HepG2 (cell line): ENCODE measurements at regions of chr12 and their contacts with region 1.

Region 1: DNA sequence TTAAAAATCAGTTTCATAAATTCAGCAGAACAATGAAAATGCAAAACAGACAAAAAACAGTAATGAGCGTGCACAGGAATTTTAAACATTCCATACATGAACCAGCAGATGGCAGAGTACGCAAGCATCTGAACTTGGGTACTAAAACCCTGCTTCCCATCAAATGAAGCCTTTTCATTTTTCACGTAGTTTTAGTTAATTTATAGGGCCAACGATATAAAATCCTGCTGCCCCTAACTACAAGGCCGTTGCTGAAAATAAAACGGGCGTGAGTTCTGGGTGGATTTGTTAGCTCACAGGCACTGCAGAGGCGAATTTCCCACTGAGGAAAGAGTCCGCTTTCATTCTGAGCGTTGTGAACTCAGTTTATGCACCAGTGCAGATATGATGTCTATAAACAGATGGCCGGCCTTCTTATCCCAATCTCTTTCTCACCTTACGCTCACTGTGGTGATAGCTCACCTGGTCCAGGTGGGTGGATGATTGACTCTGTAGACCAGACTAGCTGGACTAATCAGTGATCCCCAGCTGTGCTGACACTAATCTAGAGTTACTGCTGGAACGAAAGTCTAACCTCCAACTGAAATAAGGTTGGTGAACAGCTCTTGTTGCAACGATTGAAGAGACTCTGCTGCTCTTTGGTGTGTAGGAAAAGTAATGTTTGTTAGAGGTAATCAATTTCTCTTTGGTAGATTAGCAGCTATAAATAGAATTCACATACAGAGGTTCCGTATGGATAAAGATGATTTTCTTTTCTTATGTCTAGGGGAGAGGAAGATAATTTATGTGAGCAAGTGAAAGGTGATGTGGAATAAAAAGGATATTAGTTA is 89.2 kb downstream of the PDZRN4 start:
- DNase-seq: peak; percentile 26
- ATAC-seq: peak; percentile 54; the same call in 2 of the 3 replicates
- H3K4me3 ChIP-seq: no peak overlapping the region
- H3K27ac ChIP-seq: no peak overlapping the region
- H3K4me1 ChIP-seq: no peaks in the 10 kb centered on the region
- H3K27me3 ChIP-seq: no peaks in the 10 kb centered on the region
- CTCF ChIP-seq: peak; percentile 75
- EP300 ChIP-seq: no peak
- POLR2A ChIP-seq: no peak
- RAD21 ChIP-seq: peak; percentile 54; the same call in 1 of the 2 replicates

Region 2: DNA sequence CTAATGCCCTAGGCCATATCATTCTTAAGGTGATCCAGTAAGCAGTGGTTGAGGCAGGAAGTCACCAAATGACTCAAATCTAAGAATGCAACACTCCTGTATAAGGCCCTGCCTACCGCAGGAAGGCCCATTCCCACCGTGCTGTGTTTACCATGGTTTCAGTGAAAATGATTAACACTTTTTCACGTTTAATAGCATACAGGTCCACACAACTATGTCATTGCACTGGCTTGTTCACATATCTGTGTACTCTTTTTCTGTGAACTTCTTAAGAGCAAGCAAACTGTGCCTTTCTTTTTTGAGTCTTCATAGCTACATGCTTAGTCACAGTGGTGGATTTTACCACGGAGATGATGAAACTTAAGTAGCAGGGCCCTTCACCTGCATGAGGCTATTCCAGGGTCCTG is 370.2 kb before region 1 on chr12:
- CTCF ChIA-PET with region 1: no interaction called
- POLR2A ChIA-PET with region 1: no interaction called
- in situ Hi-C with region 1: no loop called
- intact Hi-C with region 1: no loop called
- DNase-seq: no peak
- ATAC-seq: no peak
- H3K4me3 ChIP-seq: no peak overlapping the region
- H3K27ac ChIP-seq: no peak overlapping the region
- H3K4me1 ChIP-seq: no peaks in the 10 kb centered on the region
- H3K27me3 ChIP-seq: no peaks in the 10 kb centered on the region; a peak in 1 of 5 replicates
- CTCF ChIP-seq: no peak
- EP300 ChIP-seq: no peak
- POLR2A ChIP-seq: no peak
- RAD21 ChIP-seq: no peak

Region 3: DNA sequence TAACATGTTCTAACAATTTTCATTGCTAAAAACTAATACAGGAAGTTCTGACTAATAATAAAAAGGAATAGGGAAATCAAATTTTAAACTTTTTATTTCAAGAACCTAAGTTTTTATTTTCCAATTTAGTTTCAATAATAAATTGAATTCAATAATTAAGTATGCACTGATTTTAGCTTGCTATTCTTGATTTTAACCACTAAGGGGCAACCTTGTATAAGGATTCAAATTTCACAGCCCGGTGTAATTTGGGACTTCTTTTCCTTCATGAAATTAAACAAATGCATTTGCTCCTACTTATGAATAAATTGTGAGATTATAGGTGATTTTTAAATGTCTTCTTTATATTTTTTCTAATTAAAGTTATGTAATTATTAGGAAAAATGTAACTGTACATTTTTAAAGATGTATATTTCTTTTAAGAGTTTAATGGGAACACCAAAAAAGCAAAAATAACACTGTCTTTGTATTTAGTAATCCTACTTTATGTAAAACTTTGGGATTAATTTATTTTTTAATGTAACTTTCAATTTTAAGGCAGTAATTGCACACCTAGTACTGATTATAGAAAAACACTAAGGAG is 330.6 kb before region 1 on chr12:
- CTCF ChIA-PET with region 1: no interaction called
- POLR2A ChIA-PET with region 1: no interaction called
- in situ Hi-C with region 1: no loop called
- intact Hi-C with region 1: loop called (anchors 2 kb)
- DNase-seq: peak; percentile 4
- ATAC-seq: no peak
- H3K4me3 ChIP-seq: no peak overlapping the region
- H3K27ac ChIP-seq: no peak overlapping the region
- H3K4me1 ChIP-seq: no peaks in the 10 kb centered on the region
- H3K27me3 ChIP-seq: no peaks in the 10 kb centered on the region
- CTCF ChIP-seq: peak; percentile 47
- EP300 ChIP-seq: no peak
- POLR2A ChIP-seq: no peak
- RAD21 ChIP-seq: no peak

Region 4: GRCh38 chr12:41250748-41251147 is 26.6 kb before region 1 on chr12:
- CTCF ChIA-PET with region 1: no interaction called
- POLR2A ChIA-PET with region 1: no interaction called
- in situ Hi-C with region 1: no loop called
- intact Hi-C with region 1: no loop called
- DNase-seq: no peak
- ATAC-seq: no peak
- H3K4me3 ChIP-seq: no peak overlapping the region
- H3K27ac ChIP-seq: no peak overlapping the region
- H3K4me1 ChIP-seq: no peaks in the 10 kb centered on the region
- H3K27me3 ChIP-seq: no peaks in the 10 kb centered on the region
- CTCF ChIP-seq: no peak
- EP300 ChIP-seq: no peak
- POLR2A ChIP-seq: no peak
- RAD21 ChIP-seq: no peak

Region 5: DNA sequence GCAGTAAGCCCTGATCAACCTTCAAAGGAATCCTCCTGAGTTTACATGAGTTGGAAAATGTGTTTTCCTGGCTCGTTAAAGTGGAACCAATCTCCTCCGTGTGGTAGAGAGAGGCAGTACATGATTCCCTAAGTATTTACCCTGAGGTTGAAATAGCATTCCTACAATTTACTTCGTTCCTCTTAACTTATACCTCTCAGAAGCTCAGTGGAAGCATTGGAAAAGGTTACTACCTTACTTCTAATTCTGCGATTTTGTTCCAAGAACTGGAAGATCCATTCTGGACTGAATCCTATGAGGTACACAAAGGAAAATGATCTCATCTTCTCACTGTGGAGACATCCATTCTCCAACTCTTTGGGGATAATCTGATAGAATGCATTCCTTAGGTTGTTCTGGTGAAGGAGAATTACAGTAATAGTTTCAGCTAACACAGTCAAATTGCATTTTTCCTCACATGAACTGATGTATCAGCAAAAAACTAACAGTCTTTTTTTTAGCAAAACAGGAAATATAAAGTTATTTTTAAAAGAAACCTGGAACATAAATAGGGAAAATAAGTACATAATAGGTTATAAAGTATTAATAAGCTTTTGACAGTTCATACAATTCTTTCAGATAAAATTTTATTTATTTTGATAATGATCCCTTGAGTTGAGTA is 386.4 kb after region 1 on chr12:
- CTCF ChIA-PET with region 1: interaction called, 8 read pairs
- POLR2A ChIA-PET with region 1: no interaction called
- in situ Hi-C with region 1: no loop called
- intact Hi-C with region 1: loop called (anchors 1 kb)
- DNase-seq: peak; percentile 28
- ATAC-seq: peak; percentile 91
- H3K4me3 ChIP-seq: no peak overlapping the region
- H3K27ac ChIP-seq: no peak overlapping the region
- H3K4me1 ChIP-seq: no peaks in the 10 kb centered on the region
- H3K27me3 ChIP-seq: no peaks in the 10 kb centered on the region; a peak in 1 of 5 replicates
- CTCF ChIP-seq: peak; percentile 56
- EP300 ChIP-seq: no peak
- POLR2A ChIP-seq: no peak
- RAD21 ChIP-seq: no peak

Region 6: DNA sequence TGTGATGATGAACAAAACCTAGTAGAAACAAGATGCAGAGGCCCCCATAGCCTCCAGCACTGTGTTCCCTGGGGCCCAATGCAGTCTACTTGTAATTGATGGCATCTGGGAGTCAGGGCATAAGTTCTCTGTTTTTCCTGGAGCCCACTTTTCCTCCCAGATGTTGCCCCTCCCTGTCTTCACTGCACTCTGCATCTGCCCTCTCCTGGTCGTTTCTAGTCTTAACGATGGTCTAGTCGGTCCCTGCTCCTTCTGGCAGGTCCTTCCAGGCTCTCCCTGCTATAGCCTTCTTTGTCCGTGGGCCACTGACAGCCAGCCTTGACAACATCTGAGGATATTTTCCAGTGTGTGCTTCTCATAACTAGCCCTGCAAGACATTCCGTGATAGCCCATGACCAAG is 659.0 kb after region 1 on chr12:
- CTCF ChIA-PET with region 1: no interaction called
- POLR2A ChIA-PET with region 1: no interaction called
- in situ Hi-C with region 1: no loop called
- intact Hi-C with region 1: loop called (anchors 5 kb)
- DNase-seq: no peak
- ATAC-seq: no peak
- H3K4me3 ChIP-seq: no peak overlapping the region
- H3K27ac ChIP-seq: no peak overlapping the region
- H3K4me1 ChIP-seq: no peaks in the 10 kb centered on the region
- H3K27me3 ChIP-seq: peaks cover 0 to 3% of the 10 kb centered on the region in 2 experiments; a peak in 2 of 5 replicates
- CTCF ChIP-seq: no peak
- EP300 ChIP-seq: no peak
- POLR2A ChIP-seq: no peak
- RAD21 ChIP-seq: no peak